Esophagus squamous epithelium (tissue), 5 donors: ENCODE measurements at regions of chr12 and their contacts with region 1.

Region 1: DNA sequence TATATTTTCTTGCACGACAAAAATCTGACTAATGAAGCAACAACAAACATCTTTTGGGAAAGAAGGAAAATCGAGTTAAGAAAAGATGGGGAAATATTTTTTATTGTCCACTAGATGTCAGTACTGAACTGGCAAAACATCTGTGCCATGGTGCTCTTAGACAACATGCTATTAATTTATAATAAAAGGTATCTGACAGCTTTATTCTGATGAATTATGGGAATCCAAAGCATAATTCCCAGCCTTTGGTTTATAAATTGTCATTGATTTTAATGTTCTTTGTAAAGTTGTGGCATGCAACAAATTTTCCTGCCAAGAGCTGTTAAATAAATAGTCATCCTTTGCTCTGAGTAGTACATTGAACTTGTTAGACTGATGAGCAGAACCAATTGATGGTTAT is 231.2 kb downstream of the ETNK1 start:
- DNase-seq: no peak
- H3K4me3 ChIP-seq: no peak overlapping the region
- H3K27ac ChIP-seq: no peak overlapping the region
- H3K4me1 ChIP-seq: no peaks in the 10 kb centered on the region
- H3K27me3 ChIP-seq: peaks cover 0 to 3% (median 0%) of the 10 kb centered on the region in 4 donors
- CTCF ChIP-seq: peak in 5 of 6 experiments; percentile 44 to 58 (median 51)
- POLR2A ChIP-seq: no peak

Region 2: DNA sequence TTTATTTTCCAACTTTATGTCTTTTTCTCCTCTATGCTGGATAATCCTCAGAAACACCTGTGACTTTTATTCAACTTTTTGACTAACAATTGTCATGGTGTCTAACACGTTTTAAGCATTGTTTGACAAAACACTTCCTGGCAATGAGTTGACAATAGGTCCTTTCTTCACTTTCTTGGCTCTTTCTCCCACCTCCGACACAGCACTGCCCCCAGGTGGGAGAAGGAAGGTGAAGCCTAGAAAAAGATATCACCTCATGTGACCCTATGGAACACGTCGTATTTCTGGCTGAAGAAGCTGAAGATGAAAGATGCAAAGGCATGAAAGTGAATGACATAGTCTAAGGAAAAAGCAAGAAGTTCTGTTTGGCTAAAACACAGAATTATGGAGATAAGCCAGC is 198.8 kb after region 1 on chr12:
- intact Hi-C with region 1: loop called (anchors 10 kb)
- DNase-seq: no peak
- H3K4me3 ChIP-seq: no peak overlapping the region
- H3K27ac ChIP-seq: no peak overlapping the region
- H3K4me1 ChIP-seq: no peaks in the 10 kb centered on the region
- H3K27me3 ChIP-seq: no peaks in the 10 kb centered on the region
- CTCF ChIP-seq: peak in 3 of 6 experiments; percentile 32 to 38 (median 37)
- POLR2A ChIP-seq: no peak